Motor neuron (in vitro differentiated cells): ENCODE measurements at regions of chr14 and their contacts with region 1.

Region 1: DNA sequence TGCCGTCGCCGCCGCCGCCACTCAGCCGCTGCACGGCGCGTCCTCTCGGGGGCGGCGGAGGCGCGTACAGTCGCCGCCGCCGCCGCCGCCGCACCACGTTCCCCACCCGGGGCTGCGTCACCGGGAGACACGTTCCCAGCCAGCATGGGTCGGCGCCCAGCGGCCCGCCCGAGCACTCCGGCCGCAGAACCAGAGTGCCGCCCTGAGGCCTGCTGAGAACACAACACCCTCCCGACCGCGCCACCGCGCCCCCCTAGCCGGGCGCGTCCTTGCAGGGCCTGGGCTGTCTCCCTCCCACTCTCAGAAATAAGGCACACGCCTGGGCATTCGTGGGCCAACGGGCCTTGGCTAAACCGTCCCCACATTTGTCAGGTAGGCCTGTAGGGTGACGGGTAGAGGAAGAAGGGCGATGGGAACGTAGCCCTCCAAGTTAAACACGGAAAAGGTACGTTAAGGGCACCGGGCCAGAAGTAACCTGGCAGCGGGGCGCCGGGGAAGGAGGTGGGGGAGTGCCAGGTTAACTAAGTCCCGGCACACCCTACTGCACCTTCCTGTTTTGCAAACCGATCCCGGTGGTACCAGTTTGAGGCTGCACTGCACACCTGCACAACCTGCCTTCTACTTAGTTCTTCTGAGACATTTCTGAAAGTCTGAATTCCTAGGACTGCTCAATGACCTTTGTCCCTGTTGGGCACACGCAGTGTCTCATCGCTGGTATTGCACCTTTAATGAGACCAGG is at the start of gene MAP4K5:
- ATAC-seq: peak; percentile 92 to 98 (median 98)
- H3K4me3 ChIP-seq: peak within 1 kb of the TSS; percentile 55 to 95 (median 80)
- H3K27ac ChIP-seq: peak within 1 kb of the TSS; percentile 85 to 96
- H3K4me1 ChIP-seq: peaks cover 7 to 15% of the 10 kb centered on the region in 2 donors
- total RNA-seq, gene MAP4K5: 31.6 to 69.8 (median 43.0) TPM

Region 2: GRCh38 chr14:50342221-50343078 is 190.2 kb before region 1 on chr14:
- in situ Hi-C with region 1: loop called in 1 of 9 experiments (anchors 25 kb)
- ATAC-seq: peak; percentile 58 to 96 (median 80)
- H3K4me3 ChIP-seq: no peak overlapping the region
- H3K27ac ChIP-seq: no peak overlapping the region
- H3K4me1 ChIP-seq: no peaks in the 10 kb centered on the region

Region 3: DNA sequence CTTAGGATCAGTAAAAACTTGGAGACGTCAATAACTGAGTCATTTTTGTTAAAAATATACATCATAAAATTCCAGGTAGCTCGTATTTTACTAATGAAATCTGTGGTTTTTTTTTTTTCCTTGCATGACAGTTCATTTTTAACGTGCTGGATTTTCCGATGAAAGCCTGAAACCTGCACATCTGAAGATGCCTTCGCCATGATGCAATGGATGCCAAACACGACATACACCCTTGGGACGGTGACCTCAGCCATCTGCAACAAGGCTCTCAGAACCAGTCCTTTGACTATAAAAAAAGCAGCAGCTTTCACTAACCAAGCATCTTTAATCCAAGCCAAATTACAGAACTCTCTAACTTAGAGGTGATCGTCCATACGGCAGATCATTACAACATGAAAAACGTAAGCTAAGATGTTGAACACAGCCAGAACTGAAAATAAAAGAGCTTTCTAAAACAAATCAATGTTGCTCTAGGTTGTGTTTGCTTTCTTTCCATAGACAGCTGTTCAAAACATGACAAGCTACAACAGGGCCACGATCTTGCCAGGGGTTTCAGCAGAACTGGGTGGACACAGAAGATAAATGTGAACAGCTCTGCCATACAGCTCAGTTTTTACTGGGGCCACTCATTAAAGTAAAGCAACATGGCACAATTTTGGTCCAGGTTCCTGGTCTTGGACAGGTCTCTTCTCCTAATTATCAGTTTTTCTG is 290.5 kb after region 1 on chr14:
- in situ Hi-C with region 1: no loop called
- ATAC-seq: peak in 5 of 8 experiments; percentile 54 to 69 (median 67)
- H3K4me3 ChIP-seq: no peak overlapping the region
- H3K27ac ChIP-seq: peak overlapping the region; percentile 56 to 81
- H3K4me1 ChIP-seq: peaks cover 76 to 90% of the 10 kb centered on the region in 2 donors